Activated T-helper 2 cell treated with anti-CD3 and anti-CD28 coated beads, Interferon-gamma antibody, Interleukin-2, Interleukin-4, amounts not matched to agents 10 μg/mL and 5 μg/mL and 100 μg/mL, durations not matched to agents 14 hours and 24 hours and 36 hours (primary cell): ENCODE measurements at regions of chr12 and their contacts with region 1.

Region 1: DNA sequence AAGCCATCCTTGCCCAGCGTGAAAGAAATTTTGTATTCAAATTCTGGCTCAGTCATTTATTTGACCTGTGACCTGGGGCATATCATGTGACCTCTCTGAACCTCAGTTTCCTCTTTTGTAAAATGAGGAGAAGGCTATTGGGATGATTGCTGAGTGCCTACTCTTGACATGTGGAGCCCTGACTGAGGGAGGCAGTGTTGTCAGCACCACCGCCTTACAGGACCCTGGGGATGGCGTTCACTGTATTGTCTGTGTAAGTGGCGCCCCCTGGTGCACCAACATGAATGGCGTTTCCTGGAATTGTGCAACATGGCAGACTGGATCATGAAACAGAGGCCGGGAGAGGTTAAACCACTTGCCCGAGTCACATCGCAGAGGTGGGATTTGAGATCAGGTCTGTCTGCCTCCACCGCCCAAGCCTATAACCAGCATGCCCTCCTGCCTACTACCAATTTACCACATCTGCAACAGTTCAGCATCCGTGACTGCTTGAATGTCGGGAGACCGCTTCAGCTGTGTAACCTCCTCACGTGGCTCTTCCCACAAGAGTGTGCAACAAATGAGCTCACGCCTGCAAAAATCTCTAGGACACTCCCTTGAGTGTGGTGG is 20.1 kb upstream of the CCDC63 start:
- DNase-seq: peak; percentile 78
- H3K4me3 Mint-ChIP-seq: peak overlapping the region; percentile 39
- H3K27ac Mint-ChIP-seq: no peak overlapping the region
- H3K4me1 Mint-ChIP-seq: peaks cover 8% of the 10 kb centered on the region
- H3K27me3 Mint-ChIP-seq: peaks cover 7% of the 10 kb centered on the region

Region 2: DNA sequence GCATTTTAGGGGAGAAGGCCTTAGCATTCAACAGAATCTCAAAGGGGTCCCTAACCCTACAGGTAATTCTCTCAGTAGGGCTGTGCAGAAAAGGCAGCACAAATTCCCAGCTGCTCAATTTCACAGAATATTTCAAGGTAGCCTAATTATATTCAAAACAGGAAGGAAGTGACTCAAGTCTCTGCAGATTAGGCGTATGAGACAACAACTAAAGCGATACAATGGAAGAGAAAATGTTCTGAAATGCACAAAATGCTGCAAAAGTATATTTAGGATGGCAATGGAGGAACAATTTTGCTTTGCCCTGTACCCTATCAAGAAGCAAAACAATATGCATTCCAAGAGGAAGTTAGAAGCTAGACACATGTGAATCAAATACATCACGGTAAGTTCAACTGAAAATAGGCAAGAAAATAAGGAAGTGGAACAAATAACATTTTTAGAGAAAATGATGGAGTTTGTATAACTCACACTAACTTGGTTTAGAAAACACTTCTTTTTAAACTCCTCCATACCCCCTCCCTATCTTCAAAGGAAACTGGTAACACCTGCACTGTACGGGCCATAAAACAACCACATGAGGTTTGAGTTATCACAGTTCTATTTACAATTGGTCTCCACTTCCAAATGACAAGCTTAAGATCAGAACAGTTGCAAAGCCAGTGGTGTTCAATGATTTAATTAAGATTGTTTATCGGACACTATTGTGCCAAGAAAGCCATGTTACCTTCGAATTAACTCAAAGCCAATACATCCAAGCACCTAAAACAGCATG is 832.1 kb before region 1 on chr12:
- intact Hi-C with region 1: no loop called
- DNase-seq: no peak
- H3K4me3 Mint-ChIP-seq: peak overlapping the region; percentile 98
- H3K27ac Mint-ChIP-seq: peak overlapping the region; percentile 86
- H3K4me1 Mint-ChIP-seq: peaks cover 47% of the 10 kb centered on the region
- H3K27me3 Mint-ChIP-seq: no peaks in the 10 kb centered on the region

Region 3: DNA sequence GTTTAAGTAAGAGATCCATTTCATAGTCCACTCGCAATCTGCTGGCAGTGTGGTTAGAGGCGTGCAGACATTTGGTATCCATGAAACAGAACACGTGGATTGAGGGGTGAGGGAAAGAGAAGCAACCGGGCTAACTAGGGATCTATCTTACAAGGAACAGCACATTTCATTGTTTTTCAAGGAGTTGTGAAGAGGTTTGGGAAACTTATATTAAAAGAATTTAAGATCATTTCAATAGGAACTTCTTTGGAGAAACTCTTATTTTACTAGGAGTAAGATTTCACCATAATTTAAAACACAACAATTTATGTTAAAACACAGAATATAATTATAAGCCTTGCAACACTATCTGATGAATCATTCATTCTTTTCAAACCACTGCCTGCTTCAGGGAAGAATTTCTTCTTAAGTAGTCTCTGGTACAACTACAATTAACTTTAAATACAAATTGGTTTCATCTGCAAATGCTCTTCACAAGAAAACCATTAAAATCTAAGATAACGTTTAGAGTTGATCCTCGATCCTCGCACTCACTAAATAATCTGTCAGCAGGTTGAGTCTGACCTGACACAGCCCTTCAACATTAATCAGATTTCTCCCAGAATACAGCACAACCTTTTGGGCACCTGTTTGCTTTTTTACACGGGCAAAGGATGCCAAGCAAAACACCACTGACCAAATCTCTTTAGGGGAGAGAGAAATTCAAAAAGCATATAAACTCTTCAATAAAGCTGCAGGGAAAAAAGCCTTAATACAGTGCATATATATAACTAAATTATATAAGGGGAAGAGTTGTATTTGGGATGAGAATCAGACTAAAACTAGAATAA is 270.9 kb before region 1 on chr12:
- intact Hi-C with region 1: loop called (anchors 10 kb)
- DNase-seq: no peak
- H3K4me3 Mint-ChIP-seq: no peak overlapping the region
- H3K27ac Mint-ChIP-seq: peak overlapping the region; percentile 14
- H3K4me1 Mint-ChIP-seq: peaks cover 31% of the 10 kb centered on the region
- H3K27me3 Mint-ChIP-seq: no peaks in the 10 kb centered on the region

Region 4: GRCh38 chr12:110619534-110619953 is 207.2 kb before region 1 on chr12:
- intact Hi-C with region 1: loop called (anchors 1 kb)
- DNase-seq: no peak
- H3K4me3 Mint-ChIP-seq: peak overlapping the region; percentile 30
- H3K27ac Mint-ChIP-seq: peak overlapping the region; percentile 64
- H3K4me1 Mint-ChIP-seq: peaks cover 12% of the 10 kb centered on the region
- H3K27me3 Mint-ChIP-seq: no peaks in the 10 kb centered on the region

Region 5: DNA sequence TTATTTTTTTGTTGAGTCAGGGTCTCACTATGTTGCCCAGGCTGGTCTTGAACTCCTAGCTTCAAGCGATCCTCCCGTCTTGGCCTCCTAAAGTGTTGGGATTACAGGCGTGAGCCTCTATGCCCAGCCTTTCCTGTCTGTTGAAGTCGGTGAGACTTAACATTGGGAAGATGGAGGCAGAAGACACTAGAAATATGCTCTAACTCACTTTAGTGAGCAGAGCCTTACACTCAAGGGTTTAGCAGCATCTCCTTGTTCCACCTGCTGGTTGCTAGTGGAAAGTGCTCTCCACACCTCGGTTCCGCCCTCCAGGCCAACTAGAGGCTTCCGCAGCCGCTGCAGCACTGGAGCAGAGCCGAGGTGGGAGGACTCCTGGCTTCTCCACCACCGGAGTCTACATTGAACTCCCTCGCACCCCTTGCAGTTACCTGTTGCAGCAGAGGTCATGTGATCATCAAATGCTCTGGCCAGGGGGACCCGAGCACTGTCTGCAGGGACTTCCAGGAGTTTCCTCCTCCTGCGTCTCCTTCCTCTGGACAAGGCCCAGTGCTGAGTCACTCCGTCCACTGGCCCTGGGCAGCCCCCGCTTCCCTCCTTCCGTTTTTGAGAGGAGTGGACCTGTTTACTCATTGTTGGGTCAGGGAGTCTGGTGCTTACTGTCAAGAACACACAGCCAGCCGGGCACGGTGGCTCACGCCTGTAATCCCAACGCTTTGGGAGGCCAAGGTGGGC is 128.4 kb before region 1 on chr12:
- intact Hi-C with region 1: loop called (anchors 2 kb)
- DNase-seq: peak; percentile 77
- H3K4me3 Mint-ChIP-seq: no peak overlapping the region
- H3K27ac Mint-ChIP-seq: peak overlapping the region; percentile 72
- H3K4me1 Mint-ChIP-seq: peaks cover 15% of the 10 kb centered on the region
- H3K27me3 Mint-ChIP-seq: no peaks in the 10 kb centered on the region

Region 6: DNA sequence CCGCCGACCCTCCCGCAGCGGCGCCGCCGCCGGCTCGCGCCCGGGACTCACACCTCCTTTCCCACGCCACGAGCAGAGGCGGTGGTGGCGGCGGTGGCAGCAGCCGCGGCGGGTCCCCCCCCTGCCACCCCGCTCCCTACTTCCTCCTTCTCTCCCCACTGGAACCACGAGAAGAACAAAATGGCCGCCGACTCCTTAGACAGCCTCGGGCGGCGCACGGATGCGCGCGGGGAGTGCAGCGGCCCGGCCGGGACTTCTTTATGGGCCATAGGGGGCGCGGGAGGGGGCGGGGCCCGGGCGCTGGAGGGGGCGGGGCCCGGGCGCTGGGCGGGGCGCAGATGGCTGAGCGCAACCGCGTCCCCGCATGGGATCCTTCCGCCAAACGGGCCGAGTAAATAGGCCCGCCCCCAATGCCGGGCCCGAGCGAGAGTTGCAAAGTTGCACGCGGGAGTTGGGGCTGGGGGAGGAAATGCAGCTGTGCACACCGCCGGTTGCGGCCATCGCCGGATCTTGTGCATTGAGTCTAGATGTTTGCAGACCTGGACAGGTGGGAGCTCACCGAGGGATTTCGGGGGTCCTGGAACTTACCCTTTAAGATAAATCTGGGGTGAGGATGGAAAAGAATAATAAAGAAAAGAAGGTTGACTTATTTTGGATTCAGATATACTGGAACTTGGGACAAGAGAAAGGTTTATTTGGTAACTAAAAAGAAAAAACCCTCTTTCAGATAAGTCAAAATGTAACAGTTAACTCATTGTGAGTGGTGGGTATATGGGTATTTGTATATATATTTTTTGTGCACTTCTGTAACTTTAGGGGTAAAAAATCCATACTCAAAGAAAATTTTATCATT is 83.8 kb before region 1 on chr12 and contains the start of gene PPP1CC:
- intact Hi-C with region 1: loop called (anchors 1 kb)
- DNase-seq: peak; percentile 89
- H3K4me3 Mint-ChIP-seq: peak within 1 kb of the TSS; percentile 100
- H3K27ac Mint-ChIP-seq: peak within 1 kb of the TSS; percentile 99
- H3K4me1 Mint-ChIP-seq: peaks cover 38% of the 10 kb centered on the region
- H3K27me3 Mint-ChIP-seq: no peaks in the 10 kb centered on the region
- total RNA-seq, gene PPP1CC: 241 and 244 TPM in 2 replicates